ENCODE measurements at regions of chr3 and their contacts with region 1.

Region 1: DNA sequence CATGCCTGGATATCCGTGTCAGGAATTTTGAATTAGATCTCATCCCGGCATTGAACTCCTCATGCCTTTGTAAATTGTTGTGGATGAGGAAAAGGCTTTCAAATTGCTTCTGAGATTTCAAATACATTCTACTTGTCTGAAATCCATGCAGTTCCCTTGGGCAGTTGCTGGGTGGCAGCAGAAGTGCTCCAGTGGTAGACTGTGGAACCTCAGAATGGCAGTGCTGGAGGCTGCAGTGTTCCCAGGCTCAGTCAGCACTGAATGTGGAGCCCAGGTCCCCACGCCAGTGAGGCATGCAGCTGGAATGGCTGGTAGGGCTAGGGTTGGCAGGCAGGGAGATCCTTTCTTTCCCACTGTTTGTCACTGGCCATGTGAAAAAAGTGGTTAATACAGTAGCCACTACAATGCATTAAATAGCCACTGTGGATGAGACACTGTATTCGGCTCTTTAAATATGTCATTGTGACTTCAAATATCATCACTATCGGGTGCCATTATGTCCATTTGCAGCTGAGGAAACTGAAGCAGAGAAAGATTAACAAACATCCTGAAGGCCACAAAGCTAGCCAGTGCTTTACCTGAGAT is 98.6 kb downstream of the TPRG1 start:
- DNase-seq: peak; percentile 93
- ATAC-seq: peak; percentile 86
- H3K4me3 ChIP-seq: no peak overlapping the region
- H3K27ac ChIP-seq: peak overlapping the region; percentile 38
- H3K4me1 ChIP-seq: peaks cover 61% of the 10 kb centered on the region
- H3K27me3 ChIP-seq: no peaks in the 10 kb centered on the region
- CTCF ChIP-seq: peak; percentile 94

Region 2: GRCh38 chr3:189304446-189305351 is 34.4 kb after region 1 on chr3:
- CTCF ChIA-PET with region 1: interaction called, 4 read pairs
- POLR2A ChIA-PET with region 1: interaction called, 3 read pairs
- intact Hi-C with region 1: loop called (anchors 1 kb)
- DNase-seq: peak; percentile 99
- ATAC-seq: peak; percentile 83
- H3K4me3 ChIP-seq: peak overlapping the region; percentile 48; the same call in 1 of the 2 replicates
- H3K27ac ChIP-seq: peak overlapping the region; percentile 94
- H3K4me1 ChIP-seq: peaks cover 40% of the 10 kb centered on the region
- H3K27me3 ChIP-seq: no peaks in the 10 kb centered on the region
- CTCF ChIP-seq: no peak

Region 3: DNA sequence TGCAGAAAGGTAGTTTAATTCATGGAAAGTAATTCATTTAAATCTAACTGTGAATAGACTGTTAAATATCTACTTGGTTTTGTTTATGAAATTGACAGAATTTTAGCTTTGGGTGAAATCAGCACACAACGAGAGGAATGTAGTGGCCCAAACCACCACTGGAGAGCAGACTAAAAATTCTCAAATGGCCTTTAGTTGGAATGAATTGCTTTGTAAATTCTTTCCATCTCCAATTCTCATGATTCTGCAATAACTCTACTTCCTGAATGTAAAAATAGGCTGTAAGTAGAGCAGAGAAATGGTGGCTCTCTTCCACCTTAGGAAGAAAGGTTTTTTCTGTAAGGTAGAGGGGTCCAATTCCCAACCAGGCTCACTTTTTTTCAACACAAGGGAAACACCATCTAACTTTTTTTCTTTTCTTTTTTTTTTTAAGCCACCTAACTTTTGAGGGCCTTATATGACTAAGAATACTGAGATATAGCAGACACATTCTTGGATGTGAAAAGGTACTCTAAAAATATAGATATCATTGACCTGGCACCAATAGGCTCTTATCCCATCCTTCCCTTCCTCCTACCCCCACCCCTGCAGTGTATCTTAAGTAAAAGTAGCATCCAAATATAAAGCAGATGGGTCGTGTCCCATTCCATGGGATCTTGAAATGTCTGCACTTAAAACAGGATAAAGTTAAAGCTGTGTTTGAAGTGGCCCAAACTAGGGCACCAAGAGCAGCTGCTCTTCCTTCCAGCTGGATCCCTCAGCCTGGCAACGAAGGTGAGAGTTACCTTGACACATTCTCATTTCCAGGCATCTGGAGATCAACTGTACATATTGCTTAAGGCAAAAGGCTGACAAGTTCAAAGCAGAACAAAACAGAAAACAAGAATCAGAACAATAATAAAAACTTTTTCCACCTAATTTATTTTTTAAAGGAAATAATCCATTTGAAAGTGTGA is 95.5 kb after region 1 on chr3:
- CTCF ChIA-PET with region 1: no interaction called
- POLR2A ChIA-PET with region 1: no interaction called
- intact Hi-C with region 1: no loop called
- DNase-seq: no peak
- ATAC-seq: no peak
- H3K4me3 ChIP-seq: no peak overlapping the region
- H3K27ac ChIP-seq: no peak overlapping the region
- H3K4me1 ChIP-seq: peaks cover 4% of the 10 kb centered on the region; the same call in 1 of the 2 replicates
- H3K27me3 ChIP-seq: no peaks in the 10 kb centered on the region
- CTCF ChIP-seq: no peak

Region 4: GRCh38 chr3:189394599-189395121 is 124.3 kb after region 1 on chr3:
- CTCF ChIA-PET with region 1: no interaction called
- POLR2A ChIA-PET with region 1: no interaction called
- intact Hi-C with region 1: loop called (anchors 1 kb)
- DNase-seq: no peak
- ATAC-seq: no peak
- H3K4me3 ChIP-seq: no peak overlapping the region
- H3K27ac ChIP-seq: no peak overlapping the region
- H3K4me1 ChIP-seq: peaks cover 20% of the 10 kb centered on the region
- H3K27me3 ChIP-seq: no peaks in the 10 kb centered on the region
- CTCF ChIP-seq: no peak

Region 5: DNA sequence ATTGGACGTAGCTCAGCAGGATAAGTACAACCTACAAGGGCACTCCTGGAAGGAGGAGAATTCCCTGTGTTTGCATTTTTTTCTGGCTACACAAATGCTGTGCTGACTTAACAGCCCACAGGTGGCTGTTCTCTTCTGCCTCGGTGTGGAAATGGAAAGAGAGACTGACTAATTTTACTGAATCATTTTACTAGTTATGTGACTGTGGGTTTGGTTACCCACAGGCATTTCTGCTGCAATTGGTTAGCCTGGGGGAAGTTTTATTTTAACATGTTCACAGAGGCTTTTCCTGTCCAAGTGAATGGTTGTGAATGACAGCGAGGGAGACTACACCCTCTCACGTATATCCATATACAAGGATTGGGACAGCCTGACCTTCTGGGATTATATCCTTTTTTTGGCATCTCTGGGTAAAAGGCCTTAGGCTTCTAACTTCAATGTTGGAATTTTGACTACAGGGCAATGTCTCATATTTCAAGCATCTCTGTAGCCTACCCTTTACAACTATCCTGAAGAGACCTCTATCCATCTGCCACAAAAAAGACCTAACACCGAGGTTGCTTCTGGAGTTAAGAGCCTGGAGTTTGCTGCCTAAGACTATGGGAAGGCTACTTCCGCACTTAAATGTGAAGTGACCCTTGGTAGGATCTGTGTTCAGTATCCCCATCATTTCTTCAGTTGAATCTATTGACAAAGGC is 293.7 kb after region 1 on chr3:
- CTCF ChIA-PET with region 1: interaction called, 3 read pairs
- POLR2A ChIA-PET with region 1: no interaction called
- intact Hi-C with region 1: loop called (anchors 1 kb)
- DNase-seq: peak; percentile 97
- ATAC-seq: peak; percentile 96
- H3K4me3 ChIP-seq: peak overlapping the region; percentile 28; the same call in 1 of the 2 replicates
- H3K27ac ChIP-seq: peak overlapping the region; percentile 66
- H3K4me1 ChIP-seq: peaks cover 23% of the 10 kb centered on the region
- H3K27me3 ChIP-seq: no peaks in the 10 kb centered on the region
- CTCF ChIP-seq: no peak; the same call in 1 of the 2 replicates

Region 6: GRCh38 chr3:189756220-189757078 is 486.1 kb after region 1 on chr3:
- CTCF ChIA-PET with region 1: no interaction called
- POLR2A ChIA-PET with region 1: no interaction called
- intact Hi-C with region 1: loop called (anchors 5 kb)
- DNase-seq: peak; percentile 96
- ATAC-seq: peak; percentile 94
- H3K4me3 ChIP-seq: peak overlapping the region; percentile 23; the same call in 1 of the 2 replicates
- H3K27ac ChIP-seq: peak overlapping the region; percentile 48
- H3K4me1 ChIP-seq: peaks cover 32% of the 10 kb centered on the region
- H3K27me3 ChIP-seq: no peaks in the 10 kb centered on the region
- CTCF ChIP-seq: no peak

Region 7: GRCh38 chr3:189947948-189948723 is 677.8 kb after region 1 on chr3:
- CTCF ChIA-PET with region 1: interaction called, 10 read pairs
- POLR2A ChIA-PET with region 1: interaction called, 3 read pairs
- intact Hi-C with region 1: loop called (anchors 1 kb)
- DNase-seq: peak; percentile 86
- ATAC-seq: peak; percentile 50
- H3K4me3 ChIP-seq: no peak overlapping the region
- H3K27ac ChIP-seq: peak overlapping the region; percentile 34; the same call in 1 of the 2 replicates
- H3K4me1 ChIP-seq: peaks cover 37% of the 10 kb centered on the region
- H3K27me3 ChIP-seq: no peaks in the 10 kb centered on the region
- CTCF ChIP-seq: peak; percentile 93